Tibial artery (tissue), 4 donors: ENCODE measurements at regions of chr5 and their contacts with region 1.

Region 1: GRCh38 chr5:137778772-137779564 is 24.8 kb upstream of the HNRNPA0 start:
- DNase-seq: no peak
- H3K4me3 ChIP-seq: no peak overlapping the region
- H3K27ac ChIP-seq: no peak overlapping the region
- H3K4me1 ChIP-seq: no peaks in the 10 kb centered on the region
- H3K27me3 ChIP-seq: no peaks in the 10 kb centered on the region
- CTCF ChIP-seq: peak; percentile 75 to 82

Region 2: DNA sequence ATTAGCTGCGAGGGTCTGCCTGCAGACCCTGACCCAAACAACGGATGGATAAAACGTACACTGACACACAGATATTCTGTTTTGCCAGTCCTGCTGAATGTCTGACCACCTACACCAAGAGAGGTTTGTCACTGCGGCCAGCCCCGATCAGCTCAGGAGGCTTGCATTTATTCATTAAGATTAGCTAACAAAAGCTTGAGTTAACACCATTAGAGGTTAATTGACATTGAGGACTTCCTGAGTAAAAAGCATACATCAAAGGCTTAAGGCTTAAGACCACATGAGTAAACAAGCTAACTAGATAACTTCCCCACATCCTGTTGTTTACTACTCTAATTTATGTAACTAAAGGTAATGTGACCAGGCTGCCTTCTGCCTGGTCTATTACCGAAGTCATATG is 1215.5 kb before region 1 on chr5:
- intact Hi-C with region 1: loop called (anchors 5 kb)
- DNase-seq: no peak
- H3K4me3 ChIP-seq: no peak overlapping the region
- H3K27ac ChIP-seq: no peak overlapping the region
- H3K4me1 ChIP-seq: no peaks in the 10 kb centered on the region
- H3K27me3 ChIP-seq: no peaks in the 10 kb centered on the region
- CTCF ChIP-seq: no peak

Region 3: DNA sequence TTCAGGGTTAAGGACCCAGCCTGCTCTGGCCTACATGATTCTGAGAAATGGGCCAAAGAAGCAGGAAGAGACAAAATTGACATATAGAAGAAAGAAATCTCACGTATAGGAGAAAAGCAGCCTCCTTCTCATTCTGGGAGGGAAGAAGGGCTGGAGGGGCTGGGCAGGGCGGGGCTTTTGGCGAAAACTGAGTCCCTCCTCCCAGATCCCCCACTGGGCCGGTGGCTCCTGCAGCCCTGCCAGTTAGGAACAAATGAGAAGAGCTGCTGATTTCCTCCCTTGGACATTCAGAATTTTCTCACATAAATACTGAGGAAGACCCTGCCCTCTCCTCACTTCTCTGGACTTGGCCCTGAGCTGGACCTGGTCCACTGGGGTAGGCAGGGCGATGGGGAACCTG is 304.7 kb after region 1 on chr5 and contains the start of gene WNT8A:
- intact Hi-C with region 1: no loop called
- DNase-seq: no peak
- H3K4me3 ChIP-seq: no peak within 1 kb of the TSS
- H3K27ac ChIP-seq: no peak within 1 kb of the TSS
- H3K4me1 ChIP-seq: no peaks in the 10 kb centered on the region
- H3K27me3 ChIP-seq: peaks cover 0 to 2% of the 10 kb centered on the region in 2 donors
- CTCF ChIP-seq: no peak

Region 4: DNA sequence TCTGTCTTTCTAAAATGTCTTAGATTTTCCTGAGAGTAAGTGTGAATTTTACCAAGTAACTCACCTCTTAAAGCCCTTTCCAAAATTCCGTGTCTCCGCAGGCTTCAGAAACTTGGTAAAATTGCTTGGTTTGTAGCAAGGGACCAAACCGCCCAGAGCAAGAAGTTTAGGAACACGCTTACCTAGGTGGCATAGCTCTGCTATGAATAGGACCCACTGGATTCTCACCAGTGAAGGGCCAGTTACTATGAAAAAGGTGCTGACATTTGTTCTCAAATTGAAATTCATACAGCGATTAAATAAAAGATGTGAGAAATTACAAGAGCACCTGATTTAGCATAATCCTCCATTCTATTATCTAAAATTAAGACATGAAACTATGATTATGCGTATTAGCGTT is 353.6 kb after region 1 on chr5:
- intact Hi-C with region 1: loop called (anchors 5 kb)
- DNase-seq: no peak
- H3K4me3 ChIP-seq: no peak overlapping the region
- H3K27ac ChIP-seq: no peak overlapping the region
- H3K4me1 ChIP-seq: no peaks in the 10 kb centered on the region
- H3K27me3 ChIP-seq: no peaks in the 10 kb centered on the region
- CTCF ChIP-seq: no peak